ENCODE measurements at regions of chr11 and their contacts with region 1.

Region 1: GRCh38 chr11:118785362-118785761 is 5.6 kb downstream of the DDX6 start:
- DNase-seq: no peak
- ATAC-seq: no peak
- H3K4me3 ChIP-seq: no peak overlapping the region
- H3K4me3 Mint-ChIP-seq: peak overlapping the region; percentile 71
- H3K27ac ChIP-seq: peak overlapping the region in 1 of 2 donors; percentile 68
- H3K27ac Mint-ChIP-seq: no peak overlapping the region
- H3K4me1 ChIP-seq: peaks cover 59 to 61% of the 10 kb centered on the region in 2 donors
- H3K4me1 Mint-ChIP-seq: peaks cover 55% of the 10 kb centered on the region
- H3K27me3 ChIP-seq: no peaks in the 10 kb centered on the region
- H3K27me3 Mint-ChIP-seq: no peaks in the 10 kb centered on the region
- CTCF ChIP-seq: no peak

Region 2: GRCh38 chr11:118771547-118772288 is 13.6 kb before region 1 on chr11:
- CTCF ChIA-PET with region 1: interaction called, 8 read pairs
- POLR2A ChIA-PET with region 1: interaction called, 5 read pairs
- intact Hi-C with region 1: loop called (anchors 2 kb)
- DNase-seq: peak; percentile 27
- ATAC-seq: no peak
- H3K4me3 ChIP-seq: peak overlapping the region in 3 of 5 experiments; percentile 1 to 23 (median 5)
- H3K4me3 Mint-ChIP-seq: peak overlapping the region; percentile 81
- H3K27ac ChIP-seq: peak overlapping the region in 1 of 2 donors; percentile 77
- H3K27ac Mint-ChIP-seq: peak overlapping the region; percentile 80
- H3K4me1 ChIP-seq: peaks cover 44 to 56% of the 10 kb centered on the region in 2 donors
- H3K4me1 Mint-ChIP-seq: peaks cover 69% of the 10 kb centered on the region
- H3K27me3 ChIP-seq: no peaks in the 10 kb centered on the region
- H3K27me3 Mint-ChIP-seq: no peaks in the 10 kb centered on the region
- CTCF ChIP-seq: no peak

Region 3: GRCh38 chr11:118807800-118808778 is 22.7 kb after region 1 on chr11:
- CTCF ChIA-PET with region 1: interaction called, 22 read pairs
- POLR2A ChIA-PET with region 1: interaction called, 15 read pairs
- intact Hi-C with region 1: no loop called
- DNase-seq: no peak
- ATAC-seq: peak; percentile 57
- H3K4me3 ChIP-seq: no peak overlapping the region
- H3K4me3 Mint-ChIP-seq: peak overlapping the region; percentile 75
- H3K27ac ChIP-seq: peak overlapping the region; percentile 5 to 61
- H3K27ac Mint-ChIP-seq: peak overlapping the region; percentile 91
- H3K4me1 ChIP-seq: peaks cover 47 to 49% of the 10 kb centered on the region in 2 donors
- H3K4me1 Mint-ChIP-seq: peaks cover 70% of the 10 kb centered on the region
- H3K27me3 ChIP-seq: no peaks in the 10 kb centered on the region
- H3K27me3 Mint-ChIP-seq: no peaks in the 10 kb centered on the region
- CTCF ChIP-seq: no peak

Region 4: GRCh38 chr11:118889781-118890180 is 104.4 kb after region 1 on chr11:
- CTCF ChIA-PET with region 1: interaction called, 85 read pairs
- POLR2A ChIA-PET with region 1: interaction called, 74 read pairs
- intact Hi-C with region 1: no loop called
- DNase-seq: peak; percentile 25
- ATAC-seq: no peak
- H3K4me3 ChIP-seq: peak overlapping the region in 2 of 5 experiments; percentile 97 to 99
- H3K4me3 Mint-ChIP-seq: peak overlapping the region; percentile 97
- H3K27ac ChIP-seq: peak overlapping the region; percentile 91 to 99
- H3K27ac Mint-ChIP-seq: peak overlapping the region; percentile 90
- H3K4me1 ChIP-seq: peaks cover 84 to 100% of the 10 kb centered on the region in 2 donors
- H3K4me1 Mint-ChIP-seq: peaks cover 93% of the 10 kb centered on the region
- H3K27me3 ChIP-seq: no peaks in the 10 kb centered on the region
- H3K27me3 Mint-ChIP-seq: no peaks in the 10 kb centered on the region
- CTCF ChIP-seq: no peak

Region 5: DNA sequence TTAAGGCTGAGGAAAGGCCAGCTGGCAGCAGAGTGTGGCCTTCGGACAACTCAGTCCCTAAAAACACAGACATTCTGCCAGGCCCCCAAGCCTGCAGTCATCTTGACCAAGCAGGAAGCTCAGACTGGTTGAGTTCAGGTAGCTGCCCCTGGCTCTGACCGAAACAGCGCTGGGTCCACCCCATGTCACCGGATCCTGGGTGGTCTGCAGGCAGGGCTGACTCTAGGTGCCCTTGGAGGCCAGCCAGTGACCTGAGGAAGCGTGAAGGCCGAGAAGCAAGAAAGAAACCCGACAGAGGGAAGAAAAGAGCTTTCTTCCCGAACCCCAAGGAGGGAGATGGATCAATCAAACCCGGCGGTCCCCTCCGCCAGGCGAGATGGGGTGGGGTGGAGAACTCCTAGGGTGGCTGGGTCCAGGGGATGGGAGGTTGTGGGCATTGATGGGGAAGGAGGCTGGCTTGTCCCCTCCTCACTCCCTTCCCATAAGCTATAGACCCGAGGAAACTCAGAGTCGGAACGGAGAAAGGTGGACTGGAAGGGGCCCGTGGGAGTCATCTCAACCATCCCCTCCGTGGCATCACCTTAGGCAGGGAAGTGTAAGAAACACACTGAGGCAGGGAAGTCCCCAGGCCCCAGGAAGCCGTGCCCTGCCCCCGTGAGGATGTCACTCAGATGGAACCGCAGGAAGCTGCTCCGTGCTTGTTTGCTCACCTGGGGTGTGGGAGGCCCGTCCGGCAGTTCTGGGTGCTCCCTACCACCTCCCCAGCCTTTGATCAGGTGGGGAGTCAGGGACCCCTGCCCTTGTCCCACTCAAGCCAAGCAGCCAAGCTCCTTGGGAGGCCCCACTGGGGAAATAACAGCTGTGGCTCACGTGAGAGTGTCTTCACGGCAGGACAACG is 110.0 kb after region 1 on chr11:
- CTCF ChIA-PET with region 1: interaction called, 85 read pairs
- POLR2A ChIA-PET with region 1: interaction called, 74 read pairs
- intact Hi-C with region 1: no loop called
- DNase-seq: peak; percentile 91
- ATAC-seq: peak; percentile 59
- H3K4me3 ChIP-seq: peak overlapping the region in 4 of 5 experiments; percentile 28 to 51 (median 44)
- H3K4me3 Mint-ChIP-seq: peak overlapping the region; percentile 79
- H3K27ac ChIP-seq: peak overlapping the region; percentile 95 to 99
- H3K27ac Mint-ChIP-seq: peak overlapping the region; percentile 86
- H3K4me1 ChIP-seq: peaks cover 73 to 83% of the 10 kb centered on the region in 2 donors
- H3K4me1 Mint-ChIP-seq: peaks cover 83% of the 10 kb centered on the region
- H3K27me3 ChIP-seq: no peaks in the 10 kb centered on the region
- H3K27me3 Mint-ChIP-seq: no peaks in the 10 kb centered on the region
- CTCF ChIP-seq: no peak

Region 6: DNA sequence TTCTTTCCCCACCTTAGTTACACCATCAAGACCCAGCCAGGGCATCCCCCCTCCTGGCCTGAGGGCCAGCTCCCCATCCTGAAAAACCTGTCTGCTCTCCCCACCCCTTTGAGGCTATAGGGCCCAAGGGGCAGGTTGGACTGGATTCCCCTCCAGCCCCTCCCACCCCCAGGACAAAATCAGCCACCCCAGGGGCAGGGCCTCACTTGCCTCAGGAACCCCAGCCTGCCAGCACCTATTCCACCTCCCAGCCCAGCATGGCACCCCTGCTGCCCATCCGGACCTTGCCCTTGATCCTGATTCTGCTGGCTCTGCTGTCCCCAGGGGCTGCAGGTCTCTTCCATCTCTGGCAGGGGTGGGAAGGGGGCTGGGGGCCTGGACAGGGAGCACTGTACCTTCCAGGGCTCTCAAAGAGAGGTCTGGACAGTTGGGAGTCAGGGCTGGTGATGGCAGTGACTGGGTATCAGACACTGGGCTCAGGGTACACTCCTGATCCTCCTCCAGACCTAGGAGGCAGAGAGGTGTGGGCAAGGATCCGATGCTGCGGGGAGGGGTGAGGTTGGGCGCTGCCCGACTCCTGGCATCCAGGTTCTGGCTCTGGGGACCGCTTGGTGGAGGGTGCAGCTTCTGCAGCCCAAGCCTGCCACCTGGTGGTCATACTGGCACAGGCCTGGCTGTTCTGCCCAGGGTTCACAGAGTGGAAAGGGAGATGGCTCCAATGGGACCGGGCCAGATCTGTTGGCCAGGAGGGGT is 170.9 kb after region 1 on chr11 and contains the start of gene UPK2:
- CTCF ChIA-PET with region 1: interaction called, 10 read pairs
- POLR2A ChIA-PET with region 1: no interaction called
- intact Hi-C with region 1: no loop called
- DNase-seq: peak; percentile 89
- ATAC-seq: peak; percentile 99
- H3K4me3 ChIP-seq: no peak within 1 kb of the TSS
- H3K4me3 Mint-ChIP-seq: no peak within 1 kb of the TSS
- H3K27ac ChIP-seq: no peak within 1 kb of the TSS
- H3K27ac Mint-ChIP-seq: peak within 1 kb of the TSS; percentile 53
- H3K4me1 ChIP-seq: peaks cover 0 to 6% of the 10 kb centered on the region in 2 donors
- H3K4me1 Mint-ChIP-seq: peaks cover 5% of the 10 kb centered on the region
- H3K27me3 ChIP-seq: peaks cover 0 to 13% (median 0%) of the 10 kb centered on the region in 4 experiments
- H3K27me3 Mint-ChIP-seq: peaks cover 22% of the 10 kb centered on the region
- CTCF ChIP-seq: peak; percentile 94
- total RNA-seq, gene UPK2: not detected in 2 replicates

Region 7: GRCh38 chr11:119057000-119057769 is 271.8 kb after region 1 on chr11 and contains the start of gene HYOU1:
- CTCF ChIA-PET with region 1: no interaction called
- POLR2A ChIA-PET with region 1: no interaction called
- intact Hi-C with region 1: no loop called
- DNase-seq: peak; percentile 99
- ATAC-seq: peak; percentile 95
- H3K4me3 ChIP-seq: peak within 1 kb of the TSS; percentile 36 to 95 (median 90)
- H3K4me3 Mint-ChIP-seq: peak within 1 kb of the TSS; percentile 97
- H3K27ac ChIP-seq: peak within 1 kb of the TSS; percentile 75 to 93
- H3K27ac Mint-ChIP-seq: peak within 1 kb of the TSS; percentile 93
- H3K4me1 ChIP-seq: peaks cover 18 to 29% of the 10 kb centered on the region in 2 donors
- H3K4me1 Mint-ChIP-seq: peaks cover 36% of the 10 kb centered on the region
- H3K27me3 ChIP-seq: no peaks in the 10 kb centered on the region
- H3K27me3 Mint-ChIP-seq: no peaks in the 10 kb centered on the region
- CTCF ChIP-seq: peak; percentile 6
- total RNA-seq, gene HYOU1: 46.2 and 48.7 TPM in 2 replicates